PC-3 (cell line): ENCODE measurements at regions of chr13 and their contacts with region 1.

Region 1: GRCh38 chr13:46492946-46493345 is 60.0 kb upstream of the LRCH1 start:
- DNase-seq: peak; percentile 66
- ATAC-seq: peak; percentile 34; the same call in 1 of the 2 replicates
- H3K4me3 ChIP-seq: no peak overlapping the region
- H3K27ac ChIP-seq: no peak overlapping the region
- H3K4me1 ChIP-seq: peaks cover 10% of the 10 kb centered on the region; the same call in 1 of the 2 replicates
- H3K27me3 ChIP-seq: no peaks in the 10 kb centered on the region
- CTCF ChIP-seq: peak; percentile 70

Region 2: DNA sequence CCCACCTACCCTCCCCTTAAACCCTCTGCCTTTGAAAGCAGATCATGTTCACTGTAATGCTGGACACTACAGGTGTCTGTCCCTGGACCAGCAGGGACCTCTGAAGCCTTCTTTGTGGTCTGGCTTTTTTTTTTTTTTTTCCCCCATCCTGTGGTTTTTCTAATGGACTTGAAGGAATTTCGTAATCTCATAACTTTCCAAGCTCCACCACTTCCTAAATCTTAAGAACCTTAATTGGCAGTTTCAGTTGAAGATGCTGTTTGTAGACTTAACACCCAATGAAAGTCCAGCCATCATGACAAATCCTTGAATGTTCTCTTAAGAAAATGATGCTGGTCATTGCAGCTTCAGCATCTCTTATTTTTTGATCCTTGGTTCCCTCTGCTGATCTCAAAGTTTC is 15.0 kb after region 1 on chr13:
- CTCF ChIA-PET with region 1: no interaction called
- POLR2A ChIA-PET with region 1: no interaction called
- intact Hi-C with region 1: no loop called
- DNase-seq: no peak
- ATAC-seq: no peak
- H3K4me3 ChIP-seq: no peak overlapping the region
- H3K27ac ChIP-seq: no peak overlapping the region
- H3K4me1 ChIP-seq: no peaks in the 10 kb centered on the region
- H3K27me3 ChIP-seq: no peaks in the 10 kb centered on the region
- CTCF ChIP-seq: no peak

Region 3: DNA sequence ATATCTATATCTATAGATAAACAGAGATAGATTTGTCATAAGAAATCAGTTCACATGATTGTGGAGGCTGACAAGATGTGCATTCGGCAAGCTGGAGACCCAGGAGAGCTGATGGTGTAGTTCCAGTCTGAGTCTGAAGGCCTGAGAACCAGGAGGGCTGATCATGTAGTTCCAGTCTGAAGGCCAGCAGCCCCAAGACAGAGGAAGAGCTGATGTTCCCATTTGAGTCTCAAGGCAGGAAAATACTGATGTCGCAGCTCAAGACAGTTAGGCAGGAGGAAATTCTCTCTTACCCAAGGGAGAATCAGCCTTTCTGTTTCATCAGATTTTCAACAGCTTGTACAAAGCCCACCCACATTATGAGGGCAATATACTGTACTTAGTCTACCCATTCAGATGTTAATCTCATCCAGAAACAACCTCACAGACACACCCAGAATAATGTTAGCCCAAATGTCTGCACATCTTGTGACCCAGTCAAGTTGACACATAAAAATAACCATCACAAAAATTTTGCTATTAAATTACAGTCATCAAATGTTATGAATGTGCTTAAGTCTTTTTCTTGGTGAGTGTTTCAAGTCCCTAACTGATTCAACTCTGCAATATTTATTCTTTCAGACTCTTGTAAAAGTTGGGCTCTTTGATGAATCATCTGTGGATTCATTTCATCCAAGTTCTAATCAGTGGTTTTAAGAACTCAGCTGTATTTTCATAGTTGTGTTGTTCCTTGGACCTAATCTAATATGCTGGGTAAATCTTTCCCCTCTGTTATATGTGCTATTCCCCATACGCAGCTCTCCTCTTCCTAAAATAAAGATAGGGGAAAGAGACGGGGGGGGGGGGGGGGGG is 37.4 kb after region 1 on chr13:
- CTCF ChIA-PET with region 1: no interaction called
- POLR2A ChIA-PET with region 1: no interaction called
- intact Hi-C with region 1: loop called (anchors 2 kb)
- DNase-seq: peak; percentile 80
- ATAC-seq: peak; percentile 84
- H3K4me3 ChIP-seq: no peak overlapping the region
- H3K27ac ChIP-seq: peak overlapping the region; percentile 62
- H3K4me1 ChIP-seq: peaks cover 32% of the 10 kb centered on the region
- H3K27me3 ChIP-seq: no peaks in the 10 kb centered on the region
- CTCF ChIP-seq: no peak

Region 4: GRCh38 chr13:46721054-46721453 is 228.1 kb after region 1 on chr13:
- CTCF ChIA-PET with region 1: no interaction called
- POLR2A ChIA-PET with region 1: no interaction called
- intact Hi-C with region 1: loop called (anchors 1 kb)
- DNase-seq: peak; percentile 41
- ATAC-seq: no peak
- H3K4me3 ChIP-seq: no peak overlapping the region
- H3K27ac ChIP-seq: no peak overlapping the region
- H3K4me1 ChIP-seq: no peaks in the 10 kb centered on the region
- H3K27me3 ChIP-seq: no peaks in the 10 kb centered on the region
- CTCF ChIP-seq: peak; percentile 67

Region 5: DNA sequence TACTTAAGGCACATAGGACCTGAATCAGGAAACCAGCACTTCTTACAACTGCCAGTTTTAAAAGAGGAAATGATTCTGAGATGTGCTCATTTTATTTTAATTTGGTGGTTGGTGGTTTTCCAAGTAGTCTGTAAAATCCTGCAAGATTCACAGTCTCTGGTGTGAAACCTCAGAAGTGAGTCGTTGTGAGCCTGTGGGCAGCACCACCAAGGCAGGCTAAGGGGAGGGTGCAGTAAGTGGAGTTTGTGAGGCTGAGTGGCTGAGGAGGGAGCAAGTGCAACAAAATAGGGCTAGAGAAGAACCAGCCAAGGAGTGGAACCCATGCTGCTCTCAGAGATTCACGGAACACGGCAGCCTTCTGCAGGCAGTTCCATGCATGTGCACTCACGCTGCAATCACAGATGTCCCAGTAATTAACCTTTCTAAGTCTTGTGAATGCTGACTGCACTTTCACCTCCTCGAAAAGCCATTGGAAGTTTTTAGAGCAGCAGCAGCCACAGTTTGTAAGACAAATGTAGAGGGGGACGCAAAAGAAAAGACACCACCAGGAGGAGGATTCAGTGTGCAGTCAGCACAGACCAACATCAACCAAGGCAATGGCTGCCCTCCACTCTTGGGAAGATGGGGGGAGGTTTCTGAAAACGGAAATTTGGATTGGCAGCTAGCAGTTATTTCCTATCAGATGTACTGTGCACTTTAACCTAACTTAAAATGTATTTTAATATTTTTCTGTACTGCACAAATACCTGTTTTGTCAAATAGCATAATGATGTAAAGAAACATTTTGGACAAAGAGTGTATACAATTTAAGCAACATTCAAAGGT is 259.1 kb after region 1 on chr13:
- CTCF ChIA-PET with region 1: no interaction called
- POLR2A ChIA-PET with region 1: no interaction called
- intact Hi-C with region 1: no loop called
- DNase-seq: no peak
- ATAC-seq: no peak; the same call in 1 of the 2 replicates
- H3K4me3 ChIP-seq: no peak overlapping the region
- H3K27ac ChIP-seq: no peak overlapping the region
- H3K4me1 ChIP-seq: peaks cover 4% of the 10 kb centered on the region; the same call in 1 of the 2 replicates
- H3K27me3 ChIP-seq: no peaks in the 10 kb centered on the region
- CTCF ChIP-seq: no peak